ENCODE measurements at regions of chr3 and their contacts with region 1.

Region 1: GRCh38 chr3:136893848-136894443 is 31.9 kb downstream of the NCK1 start:
- DNase-seq: peak; percentile 75
- ATAC-seq: peak; percentile 88
- H3K4me3 ChIP-seq: peak overlapping the region; percentile 6; the same call in 1 of the 2 replicates
- H3K27ac ChIP-seq: peak overlapping the region; percentile 40
- H3K4me1 ChIP-seq: peaks cover 13% of the 10 kb centered on the region
- H3K27me3 ChIP-seq: no peaks in the 10 kb centered on the region
- CTCF ChIP-seq: no peak

Region 2: GRCh38 chr3:136869282-136869681 is 24.7 kb before region 1 on chr3:
- CTCF ChIA-PET with region 1: no interaction called
- POLR2A ChIA-PET with region 1: no interaction called
- intact Hi-C with region 1: loop called (anchors 1 kb)
- DNase-seq: no peak
- ATAC-seq: no peak
- H3K4me3 ChIP-seq: no peak overlapping the region
- H3K27ac ChIP-seq: no peak overlapping the region
- H3K4me1 ChIP-seq: no peaks in the 10 kb centered on the region
- H3K27me3 ChIP-seq: no peaks in the 10 kb centered on the region
- CTCF ChIP-seq: no peak

Measured in PC-3 (cell line).